ENCODE measurements at regions of chr2 and their contacts with region 1.

Region 1: GRCh38 chr2:231297108-231297908 is 98.2 kb upstream of the B3GNT7 start:
- DNase-seq: peak; percentile 41 to 45
- H3K4me3 ChIP-seq: no peak overlapping the region
- H3K27ac ChIP-seq: no peak overlapping the region
- H3K4me1 ChIP-seq: peaks cover 34% of the 10 kb centered on the region
- H3K27me3 ChIP-seq: no peaks in the 10 kb centered on the region
- CTCF ChIP-seq: peak; percentile 76

Region 2: DNA sequence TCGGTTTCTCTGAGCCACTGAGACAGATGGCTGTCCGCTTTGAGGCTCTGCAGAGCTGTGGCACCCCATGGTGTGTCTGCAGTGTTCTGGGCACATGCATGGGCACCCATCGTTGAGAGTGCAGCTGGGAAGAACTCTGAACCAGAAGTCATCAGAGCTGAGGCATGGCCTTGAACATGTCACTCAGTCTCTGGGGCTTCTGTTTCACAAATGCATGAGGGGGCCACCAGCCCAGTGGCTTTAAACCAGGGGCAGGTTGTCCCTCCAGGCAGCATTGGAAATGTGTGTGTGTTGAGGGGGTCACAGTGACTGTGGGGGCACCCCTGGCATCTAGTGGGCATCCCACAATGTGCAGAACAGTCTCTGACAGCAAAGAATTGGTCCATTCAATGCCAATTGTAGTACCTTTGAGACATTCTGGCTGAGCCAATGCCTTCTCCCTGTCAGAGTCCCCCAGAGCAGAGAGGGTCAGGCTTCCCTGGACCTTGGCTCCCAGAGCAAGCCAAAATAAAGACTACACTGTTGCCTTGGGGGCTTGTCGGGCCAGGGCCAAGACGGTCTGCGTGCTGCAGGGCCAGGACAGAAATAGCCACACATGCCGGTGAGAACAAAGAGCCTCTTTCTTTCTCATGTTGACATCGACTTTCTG is 249.9 kb before region 1 on chr2:
- CTCF ChIA-PET with region 1: no interaction called
- POLR2A ChIA-PET with region 1: interaction called, 50 read pairs
- intact Hi-C with region 1: no loop called
- DNase-seq: no peak
- H3K4me3 ChIP-seq: no peak overlapping the region
- H3K27ac ChIP-seq: no peak overlapping the region
- H3K4me1 ChIP-seq: no peaks in the 10 kb centered on the region
- H3K27me3 ChIP-seq: peaks cover 16% of the 10 kb centered on the region; the same call in 1 of the 2 replicates
- CTCF ChIP-seq: no peak

Region 3: DNA sequence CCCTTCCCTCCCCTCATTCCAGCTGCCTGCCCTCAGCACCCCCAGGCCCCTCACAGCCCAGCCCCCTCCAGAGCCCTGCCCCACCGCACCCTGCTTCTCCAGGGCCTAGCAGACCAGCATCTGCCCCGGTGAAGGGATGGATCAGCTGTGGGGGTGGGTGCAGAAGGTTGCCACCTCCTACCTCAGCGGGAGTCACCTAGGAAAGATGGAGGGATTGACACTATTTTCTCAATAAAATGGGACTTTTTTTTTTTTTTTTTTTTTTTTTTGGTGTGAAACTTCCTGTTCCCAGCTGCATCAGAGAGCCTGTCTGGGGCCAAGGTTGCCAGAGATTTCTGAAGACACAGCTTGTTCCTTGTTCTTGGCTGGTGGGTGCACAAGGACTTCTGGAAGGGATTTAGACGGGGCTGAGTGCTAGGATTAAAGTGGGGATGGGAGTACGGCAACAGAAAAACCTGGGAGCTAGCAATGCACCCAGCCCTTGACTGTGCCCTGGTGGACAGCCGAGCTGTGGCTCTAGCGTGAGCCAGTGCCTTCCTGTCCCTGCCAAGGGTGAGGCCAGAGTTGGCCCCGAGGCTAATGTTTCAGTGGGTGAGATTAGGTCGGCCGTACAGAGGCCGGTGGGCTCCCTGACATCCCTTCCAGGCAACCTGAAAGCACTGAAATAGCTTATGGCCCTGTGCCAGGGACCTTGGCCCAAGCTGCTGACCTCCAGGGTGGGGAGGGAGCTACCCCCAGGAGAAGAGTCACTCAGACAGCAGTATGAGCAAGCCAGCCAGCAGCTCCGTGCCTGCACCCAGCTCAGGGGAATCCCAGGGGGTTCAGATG is 102.8 kb after region 1 on chr2:
- CTCF ChIA-PET with region 1: interaction called, 9 read pairs
- POLR2A ChIA-PET with region 1: no interaction called
- intact Hi-C with region 1: loop called (anchors 1 kb)
- DNase-seq: peak; percentile 68 to 70
- H3K4me3 ChIP-seq: peak overlapping the region; percentile 13; the same call in 1 of the 2 replicates
- H3K27ac ChIP-seq: peak overlapping the region; percentile 76
- H3K4me1 ChIP-seq: peaks cover 38% of the 10 kb centered on the region
- H3K27me3 ChIP-seq: no peaks in the 10 kb centered on the region
- CTCF ChIP-seq: peak; percentile 47; the same call in 1 of the 2 replicates